Right cardiac atrium (tissue), 5 donors: ENCODE measurements at regions of chr9 and their contacts with region 1.

Region 1: GRCh38 chr9:24561957-24562356 is 16.3 kb upstream of the IZUMO3 start:
- DNase-seq: no peak
- ATAC-seq: no peak
- H3K4me3 ChIP-seq: no peak overlapping the region
- H3K27ac ChIP-seq: no peak overlapping the region
- H3K4me1 ChIP-seq: no peaks in the 10 kb centered on the region
- H3K27me3 ChIP-seq: no peaks in the 10 kb centered on the region

Region 2: DNA sequence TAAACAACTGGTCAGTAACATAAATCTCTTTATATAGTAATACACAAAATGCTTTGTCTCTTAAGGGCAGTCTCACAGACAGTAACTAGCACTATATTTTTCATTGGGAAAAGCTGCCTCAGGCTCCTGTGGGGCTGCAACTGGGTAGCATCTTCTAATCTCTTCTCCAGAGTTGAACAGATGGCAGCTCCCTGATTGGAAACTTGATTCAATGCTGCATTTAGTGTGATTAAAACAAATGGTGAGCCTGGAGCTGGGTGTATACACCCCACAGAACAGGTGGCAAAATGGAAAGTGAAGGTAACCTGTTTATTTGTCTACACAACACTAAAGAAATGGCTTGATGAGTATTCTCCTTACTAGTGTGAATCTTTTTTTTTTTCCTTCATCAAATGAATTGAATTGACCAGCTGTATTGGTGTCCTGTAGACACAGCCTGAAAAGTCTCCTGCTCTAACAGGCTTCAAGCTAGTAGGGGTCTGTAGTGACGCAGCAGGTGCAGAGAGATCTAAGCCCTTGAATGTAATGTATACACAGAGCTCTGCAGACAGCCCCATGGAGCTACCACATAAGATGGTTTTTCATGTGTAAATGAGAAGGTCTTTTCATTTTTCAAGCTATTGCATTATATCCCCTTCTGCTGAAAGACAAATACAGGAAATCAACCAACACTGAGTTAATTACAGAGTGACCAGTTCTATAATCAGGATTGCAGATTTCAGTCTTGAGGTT is 59.6 kb before region 1 on chr9:
- intact Hi-C with region 1: loop called in 1 of 4 experiments (anchors 10 kb)
- DNase-seq: no peak
- ATAC-seq: no peak
- H3K4me3 ChIP-seq: no peak overlapping the region
- H3K27ac ChIP-seq: no peak overlapping the region
- H3K4me1 ChIP-seq: no peaks in the 10 kb centered on the region
- H3K27me3 ChIP-seq: no peaks in the 10 kb centered on the region